Activated CD4-positive, alpha-beta T cell treated with anti-CD3 and anti-CD28 coated beads for 36 hours (primary cell): ENCODE measurements at regions of chr11 and their contacts with region 1.

Region 1: GRCh38 chr11:38593649-38594048 is 1995.6 kb upstream of the RAG2 start:
- DNase-seq: no peak
- ATAC-seq: no peak
- H3K4me3 Mint-ChIP-seq: no peak overlapping the region
- H3K27ac Mint-ChIP-seq: no peak overlapping the region
- H3K4me1 Mint-ChIP-seq: no peaks in the 10 kb centered on the region
- H3K27me3 Mint-ChIP-seq: no peaks in the 10 kb centered on the region

Region 2: DNA sequence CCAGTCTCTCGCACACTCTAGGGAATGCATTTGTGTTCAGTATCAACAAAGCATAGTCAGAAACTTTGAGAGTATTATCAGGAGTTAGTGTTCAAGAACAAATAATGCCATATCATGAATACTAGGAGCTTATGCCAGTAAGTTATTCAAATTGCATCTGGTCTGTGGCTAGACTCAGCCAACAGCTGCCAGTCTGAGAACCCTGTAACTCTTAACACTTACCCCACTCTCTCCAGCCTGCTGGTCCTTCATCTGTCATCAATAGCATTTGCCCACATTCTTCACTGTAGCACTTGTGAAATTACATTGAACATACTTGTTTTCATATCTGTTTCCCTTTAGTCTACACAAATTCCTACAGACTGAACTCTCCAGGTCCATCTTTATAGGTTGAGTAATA is 838.1 kb before region 1 on chr11:
- CTCF ChIA-PET with region 1: no interaction called
- POLR2A ChIA-PET with region 1: no interaction called
- intact Hi-C with region 1: no loop called
- DNase-seq: no peak
- ATAC-seq: no peak
- H3K4me3 Mint-ChIP-seq: no peak overlapping the region
- H3K27ac Mint-ChIP-seq: no peak overlapping the region
- H3K4me1 Mint-ChIP-seq: no peaks in the 10 kb centered on the region
- H3K27me3 Mint-ChIP-seq: no peaks in the 10 kb centered on the region

Region 3: DNA sequence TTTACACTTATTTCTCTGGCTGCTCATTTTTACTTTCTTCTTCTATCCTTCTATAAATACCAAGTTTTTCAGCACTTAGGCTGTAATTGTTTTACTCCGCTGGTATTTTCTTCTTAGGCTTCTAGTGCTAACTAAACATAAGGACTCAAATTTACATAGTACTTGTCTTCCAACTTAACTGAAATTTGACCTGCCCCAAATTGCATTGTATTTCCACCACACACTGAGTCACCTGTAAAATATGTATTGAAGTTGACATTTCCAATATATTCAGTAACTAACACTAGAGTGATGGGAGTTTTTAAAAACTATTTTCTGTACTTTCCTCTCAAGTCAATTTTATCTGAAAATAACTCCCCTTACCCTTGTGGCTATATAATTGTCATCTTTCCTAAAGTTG is 201.5 kb before region 1 on chr11:
- CTCF ChIA-PET with region 1: no interaction called
- POLR2A ChIA-PET with region 1: no interaction called
- intact Hi-C with region 1: no loop called
- DNase-seq: no peak
- ATAC-seq: no peak
- H3K4me3 Mint-ChIP-seq: no peak overlapping the region
- H3K27ac Mint-ChIP-seq: no peak overlapping the region
- H3K4me1 Mint-ChIP-seq: no peaks in the 10 kb centered on the region
- H3K27me3 Mint-ChIP-seq: no peaks in the 10 kb centered on the region

Region 4: DNA sequence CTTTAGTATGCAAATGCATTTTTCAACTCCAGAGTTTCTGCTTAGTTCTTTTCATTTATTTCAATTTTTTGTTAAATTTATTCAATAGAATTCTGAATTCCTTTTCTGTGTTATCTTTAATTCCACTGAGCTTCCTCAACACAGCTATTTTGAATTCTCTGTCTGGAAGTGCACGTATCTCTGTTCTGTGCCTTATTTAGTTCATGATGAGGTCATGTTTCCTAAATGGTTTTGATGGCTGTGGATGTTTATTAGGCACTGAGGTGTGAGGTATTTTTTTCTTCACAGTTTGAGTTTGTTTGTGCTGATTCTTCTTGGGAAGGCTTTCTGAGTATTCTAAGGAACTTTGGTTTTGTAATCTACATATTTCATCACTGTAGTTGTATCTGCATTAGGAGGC is 47.2 kb after region 1 on chr11:
- CTCF ChIA-PET with region 1: no interaction called
- POLR2A ChIA-PET with region 1: no interaction called
- intact Hi-C with region 1: loop called in 1 of 2 experiments (anchors 5 kb)
- DNase-seq: no peak
- ATAC-seq: no peak
- H3K4me3 Mint-ChIP-seq: no peak overlapping the region
- H3K27ac Mint-ChIP-seq: no peak overlapping the region
- H3K4me1 Mint-ChIP-seq: no peaks in the 10 kb centered on the region
- H3K27me3 Mint-ChIP-seq: no peaks in the 10 kb centered on the region